Ovary (tissue), 10 donors: ENCODE measurements at regions of chr16 and their contacts with region 1.

Region 1: DNA sequence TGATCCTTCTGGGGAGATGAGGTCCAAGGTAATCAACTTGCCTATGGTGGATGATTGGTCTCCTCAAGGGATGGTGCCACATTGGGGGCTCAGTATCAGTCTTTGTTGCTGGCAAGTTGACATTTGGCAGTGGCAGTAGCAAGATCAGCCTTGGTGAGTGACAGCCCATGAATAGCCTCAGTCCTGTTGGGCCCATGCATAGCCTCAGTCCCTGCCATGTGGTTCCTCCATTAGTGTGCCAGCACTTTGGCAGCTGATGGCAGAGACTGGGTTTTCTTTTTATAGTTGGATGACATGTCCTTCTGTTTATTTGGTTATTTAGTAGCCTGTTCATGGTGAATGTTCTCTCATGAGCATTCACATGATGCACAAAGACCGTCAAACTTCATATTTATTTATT is 179.6 kb downstream of the CBLN1 start:
- DNase-seq: no peak
- H3K4me3 ChIP-seq: no peak overlapping the region
- H3K27ac ChIP-seq: no peak overlapping the region
- H3K4me1 ChIP-seq: no peaks in the 10 kb centered on the region
- H3K27me3 ChIP-seq: no peaks in the 10 kb centered on the region
- CTCF ChIP-seq: no peak
- EP300 ChIP-seq: no peak
- POLR2A ChIP-seq: no peak

Region 2: GRCh38 chr16:49050607-49051006 is 51.4 kb before region 1 on chr16:
- intact Hi-C with region 1: loop called in 1 of 4 experiments (anchors 5 kb)
- DNase-seq: peak in 1 of 5 donors; percentile 42
- H3K4me3 ChIP-seq: no peak overlapping the region
- H3K27ac ChIP-seq: no peak overlapping the region
- H3K4me1 ChIP-seq: no peaks in the 10 kb centered on the region
- H3K27me3 ChIP-seq: no peaks in the 10 kb centered on the region
- CTCF ChIP-seq: no peak
- EP300 ChIP-seq: no peak
- POLR2A ChIP-seq: no peak

Region 3: DNA sequence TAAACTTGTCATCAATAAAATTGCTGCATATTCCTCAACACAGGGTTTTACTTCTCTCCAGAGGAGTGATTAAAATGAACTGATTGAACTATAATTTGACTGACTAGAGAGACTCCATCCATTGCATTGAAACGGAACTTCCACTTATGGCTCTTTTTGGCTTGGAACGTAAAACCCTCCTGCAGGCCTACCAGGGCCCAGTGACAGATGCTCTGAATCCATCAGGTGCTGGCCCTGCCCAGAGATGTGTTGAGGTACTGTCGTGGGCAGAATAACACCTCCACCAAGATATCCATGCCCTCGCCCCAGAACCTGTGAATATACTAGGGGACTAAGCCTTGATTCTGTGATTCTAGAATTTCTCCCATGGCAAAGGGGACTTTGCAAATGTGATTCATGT is 134.2 kb after region 1 on chr16:
- intact Hi-C with region 1: no loop called
- DNase-seq: no peak
- H3K4me3 ChIP-seq: no peak overlapping the region
- H3K27ac ChIP-seq: no peak overlapping the region
- H3K4me1 ChIP-seq: no peaks in the 10 kb centered on the region
- H3K27me3 ChIP-seq: no peaks in the 10 kb centered on the region
- CTCF ChIP-seq: no peak
- EP300 ChIP-seq: no peak
- POLR2A ChIP-seq: no peak